Activated CD4-positive, alpha-beta memory T cell treated with anti-CD3 and anti-CD28 coated beads for 36 hours (primary cell): ENCODE measurements at regions of chr4 and their contacts with region 1.

Region 1: GRCh38 chr4:54971474-54971950 is 153.9 kb downstream of the KDR start:
- DNase-seq: no peak
- H3K4me3 Mint-ChIP-seq: no peak overlapping the region
- H3K27ac Mint-ChIP-seq: no peak overlapping the region
- H3K4me1 Mint-ChIP-seq: no peaks in the 10 kb centered on the region
- H3K27me3 Mint-ChIP-seq: peaks cover 1% of the 10 kb centered on the region

Region 2: GRCh38 chr4:54961357-54961975 is 10.0 kb before region 1 on chr4:
- CTCF ChIA-PET with region 1: interaction called, 24 read pairs
- POLR2A ChIA-PET with region 1: no interaction called
- intact Hi-C with region 1: no loop called
- DNase-seq: no peak
- H3K4me3 Mint-ChIP-seq: no peak overlapping the region
- H3K27ac Mint-ChIP-seq: no peak overlapping the region
- H3K4me1 Mint-ChIP-seq: peaks cover 16% of the 10 kb centered on the region
- H3K27me3 Mint-ChIP-seq: no peaks in the 10 kb centered on the region

Region 3: GRCh38 chr4:55321707-55322264 is 350.3 kb after region 1 on chr4:
- CTCF ChIA-PET with region 1: interaction called, 13 read pairs
- POLR2A ChIA-PET with region 1: no interaction called
- intact Hi-C with region 1: loop called (anchors 1 kb)
- DNase-seq: peak; percentile 72
- H3K4me3 Mint-ChIP-seq: no peak overlapping the region
- H3K27ac Mint-ChIP-seq: no peak overlapping the region
- H3K4me1 Mint-ChIP-seq: peaks cover 29% of the 10 kb centered on the region
- H3K27me3 Mint-ChIP-seq: peaks cover 2% of the 10 kb centered on the region

Region 4: DNA sequence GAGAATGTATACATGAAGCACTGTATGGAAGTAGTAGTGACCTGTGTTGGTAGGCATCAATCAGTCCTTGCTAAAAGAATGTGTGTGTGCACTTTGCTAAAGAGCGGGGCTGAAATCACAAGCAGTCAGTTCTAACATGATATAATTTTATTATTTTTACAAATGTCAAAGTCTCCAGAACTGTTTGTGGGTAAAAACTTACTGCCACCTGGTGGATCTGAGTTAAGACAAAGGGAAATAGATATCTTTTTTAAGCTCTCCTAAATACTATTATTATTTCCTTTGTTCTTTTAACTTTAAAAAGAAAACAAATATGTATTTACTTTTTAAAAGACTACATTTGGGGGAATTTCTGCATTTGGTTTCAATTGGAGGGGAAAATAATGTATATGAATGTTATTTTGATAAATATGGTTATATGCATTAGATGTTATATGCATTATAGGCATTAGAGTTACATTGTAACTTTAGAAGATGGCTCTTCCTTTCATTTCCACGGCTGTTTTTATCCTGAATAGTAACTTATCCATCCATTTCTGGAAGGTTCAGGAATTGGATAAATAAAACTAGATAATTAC is 583.0 kb after region 1 on chr4:
- CTCF ChIA-PET with region 1: no interaction called
- POLR2A ChIA-PET with region 1: no interaction called
- intact Hi-C with region 1: loop called (anchors 10 kb)
- DNase-seq: no peak
- H3K4me3 Mint-ChIP-seq: no peak overlapping the region
- H3K27ac Mint-ChIP-seq: no peak overlapping the region
- H3K4me1 Mint-ChIP-seq: peaks cover 10% of the 10 kb centered on the region
- H3K27me3 Mint-ChIP-seq: peaks cover 5% of the 10 kb centered on the region

Region 5: GRCh38 chr4:55736605-55737183 is 765.2 kb after region 1 on chr4:
- CTCF ChIA-PET with region 1: interaction called, 4 read pairs
- POLR2A ChIA-PET with region 1: no interaction called
- intact Hi-C with region 1: loop called (anchors 5 kb)
- DNase-seq: no peak
- H3K4me3 Mint-ChIP-seq: no peak overlapping the region
- H3K27ac Mint-ChIP-seq: no peak overlapping the region
- H3K4me1 Mint-ChIP-seq: no peaks in the 10 kb centered on the region
- H3K27me3 Mint-ChIP-seq: peaks cover 33% of the 10 kb centered on the region